ENCODE measurements at regions of chr5 and their contacts with region 1.

Region 1: DNA sequence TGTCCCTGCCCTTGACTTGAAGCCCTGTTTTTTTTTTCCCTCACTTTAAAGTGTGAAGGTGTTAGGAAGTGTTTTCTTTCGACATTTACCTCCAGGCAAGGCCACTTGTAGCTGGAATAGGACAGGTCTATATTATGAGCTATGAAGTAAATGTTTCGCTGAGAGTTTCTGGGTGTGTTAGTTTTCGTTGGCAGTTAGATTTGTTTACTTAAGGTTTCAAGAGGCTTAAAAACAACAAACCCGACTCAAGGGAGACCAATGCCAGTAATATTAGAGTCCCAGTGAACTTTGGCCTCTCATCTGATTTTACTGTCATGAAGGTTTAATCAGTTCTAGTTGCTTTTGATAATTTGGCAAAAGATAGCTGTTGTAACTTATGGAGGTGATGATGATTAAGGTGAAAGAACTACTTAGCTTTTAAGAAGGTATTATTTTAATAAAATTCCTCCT is 25.2 kb downstream of the OCLN start:
- DNase-seq: no peak
- ATAC-seq: peak in 1 of 8 donors; percentile 25
- H3K4me3 ChIP-seq: no peak overlapping the region
- H3K27ac ChIP-seq: no peak overlapping the region
- H3K4me1 ChIP-seq: peaks cover 0 to 5% (median 0%) of the 10 kb centered on the region in 9 donors
- H3K27me3 ChIP-seq: no peaks in the 10 kb centered on the region
- CTCF ChIP-seq: no peak

Region 2: DNA sequence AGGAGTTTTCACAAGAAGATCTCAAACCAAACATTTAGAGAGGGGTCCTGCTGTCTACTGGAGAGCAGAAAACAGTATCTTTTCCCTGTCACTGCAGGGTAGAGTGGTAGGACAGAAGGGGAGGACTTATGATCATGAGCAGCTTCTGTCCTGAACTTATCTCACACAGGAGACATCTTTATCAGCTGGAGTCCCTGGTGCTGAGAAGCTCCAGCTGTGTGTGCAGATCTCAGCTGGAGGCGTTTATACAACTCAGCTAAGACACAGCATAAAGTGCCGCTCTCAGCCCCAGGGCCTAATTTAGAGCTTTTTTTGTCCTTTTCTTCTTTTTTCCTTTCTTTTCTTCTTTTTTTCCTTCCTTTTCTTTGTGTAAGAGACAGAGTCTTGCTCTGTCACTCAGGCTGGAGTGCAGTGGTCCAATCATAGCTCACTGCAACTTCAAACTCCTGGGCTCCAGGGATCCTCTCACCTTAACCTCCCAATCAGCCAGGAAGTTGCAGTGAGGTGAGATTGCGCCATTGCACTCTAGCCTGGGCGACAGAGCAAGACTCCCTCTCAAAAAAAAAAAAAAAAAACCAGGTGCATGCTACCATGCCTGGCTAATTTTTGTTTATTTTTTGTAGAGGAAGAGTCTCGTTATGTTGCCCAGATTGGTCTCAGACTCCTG is 217.1 kb before region 1 on chr5:
- intact Hi-C with region 1: no loop called
- DNase-seq: no peak
- ATAC-seq: no peak
- H3K4me3 ChIP-seq: no peak overlapping the region
- H3K27ac ChIP-seq: no peak overlapping the region
- H3K4me1 ChIP-seq: no peaks in the 10 kb centered on the region
- H3K27me3 ChIP-seq: no peaks in the 10 kb centered on the region
- CTCF ChIP-seq: no peak

Region 3: GRCh38 chr5:69467442-69468225 is 50.2 kb before region 1 on chr5:
- intact Hi-C with region 1: loop called in 1 of 10 experiments (anchors 10 kb)
- DNase-seq: no peak
- ATAC-seq: peak in 1 of 8 donors; percentile 47
- H3K4me3 ChIP-seq: no peak overlapping the region
- H3K27ac ChIP-seq: no peak overlapping the region
- H3K4me1 ChIP-seq: no peaks in the 10 kb centered on the region
- H3K27me3 ChIP-seq: no peaks in the 10 kb centered on the region
- CTCF ChIP-seq: no peak